ENCODE measurements at regions of chr4 and their contacts with region 1.

Region 1: DNA sequence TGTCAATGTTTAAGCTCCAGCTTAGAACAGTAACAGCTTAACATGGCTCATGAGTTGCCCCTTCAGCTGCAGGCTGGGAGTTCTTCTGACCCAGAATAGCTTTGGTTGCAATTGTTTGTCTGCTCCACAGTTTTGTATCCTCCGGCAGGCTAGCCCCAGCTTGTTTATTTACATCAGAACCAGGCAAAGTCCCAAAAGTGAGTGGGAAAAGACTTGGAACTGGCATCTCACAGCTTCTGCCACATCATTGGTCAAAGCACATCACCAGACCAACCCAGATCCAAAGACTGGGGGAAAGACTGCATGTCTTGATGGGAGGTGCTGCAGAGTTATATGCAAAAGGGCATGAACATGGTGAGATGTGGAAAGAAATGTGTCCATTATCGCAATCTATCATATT is 231.2 kb upstream of the CPEB2 start:
- DNase-seq: no peak
- H3K4me3 ChIP-seq: no peak overlapping the region
- H3K27ac ChIP-seq: no peak overlapping the region
- H3K4me1 ChIP-seq: no peaks in the 10 kb centered on the region
- H3K27me3 ChIP-seq: 0 out of 7 replicates have a peak, but pooled peaks cover 0 to 2% (median 0%) of the 10 kb centered on the region in 4 experiments
- CTCF ChIP-seq: no peak
- EP300 ChIP-seq: no peak
- POLR2A ChIP-seq: no peak
- RAD21 ChIP-seq: no peak

Region 2: GRCh38 chr4:14787894-14788293 is 16.8 kb after region 1 on chr4:
- CTCF ChIA-PET with region 1: interaction called, 10 read pairs
- POLR2A ChIA-PET with region 1: no interaction called
- DNase-seq: no peak
- H3K4me3 ChIP-seq: no peak overlapping the region
- H3K27ac ChIP-seq: no peak overlapping the region
- H3K4me1 ChIP-seq: no peaks in the 10 kb centered on the region; a peak in 1 of 7 replicates
- H3K27me3 ChIP-seq: no peaks in the 10 kb centered on the region
- CTCF ChIP-seq: peak; percentile 25 to 77 (median 56)
- EP300 ChIP-seq: no peak
- POLR2A ChIP-seq: no peak
- RAD21 ChIP-seq: peak; percentile 85 to 87